Mammary epithelial cell (primary cell): ENCODE measurements at regions of chr1 and their contacts with region 1.

Region 1: GRCh38 chr1:209435654-209436566 is 147.6 kb upstream of the CAMK1G start:
- DNase-seq: peak; percentile 80
- H3K4me3 ChIP-seq: no peak overlapping the region
- H3K27ac ChIP-seq: peak overlapping the region; percentile 99
- H3K4me1 ChIP-seq: peaks cover 51% of the 10 kb centered on the region
- H3K27me3 ChIP-seq: no peaks in the 10 kb centered on the region
- CTCF ChIP-seq: peak; percentile 92 to 97

Region 2: DNA sequence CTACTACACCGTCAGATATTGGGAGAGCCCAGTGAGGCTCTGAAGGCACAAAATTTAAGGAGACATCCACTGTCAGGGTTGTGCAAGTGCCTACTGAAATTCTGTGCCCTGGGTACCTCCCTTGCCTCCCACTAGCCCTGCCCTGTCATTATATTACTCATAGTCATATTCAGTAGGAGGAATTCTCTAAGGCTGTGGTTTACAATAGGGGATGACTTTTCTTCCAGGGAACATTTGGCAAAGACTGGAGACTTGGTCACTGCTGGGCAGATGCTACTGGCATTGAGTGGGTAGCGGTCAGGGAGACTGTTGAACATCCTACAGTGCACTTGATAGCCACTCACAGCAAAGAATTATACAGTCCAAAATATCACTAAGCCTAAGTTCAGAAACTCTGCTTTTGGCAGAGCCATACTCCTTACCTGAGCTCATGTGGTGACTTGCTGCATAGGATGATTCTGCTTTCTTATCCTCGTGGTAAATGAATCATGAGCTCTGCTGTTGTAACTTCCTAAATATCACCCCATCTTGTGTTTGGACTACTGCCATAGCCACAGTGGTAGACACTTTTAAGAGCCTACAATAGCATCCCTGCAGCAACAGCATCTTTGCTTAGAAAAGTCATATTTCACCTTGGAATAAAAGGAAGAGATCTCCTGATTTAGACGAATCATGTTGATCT is 628.3 kb before region 1 on chr1:
- CTCF ChIA-PET with region 1: no interaction called
- dilution Hi-C with region 1: no loop called
- in situ Hi-C with region 1: no loop called
- intact Hi-C with region 1: loop called (anchors 5 kb)
- DNase-seq: peak; percentile 96
- H3K4me3 ChIP-seq: no peak overlapping the region
- H3K27ac ChIP-seq: peak overlapping the region; percentile 94
- H3K4me1 ChIP-seq: peaks cover 38% of the 10 kb centered on the region
- H3K27me3 ChIP-seq: no peaks in the 10 kb centered on the region
- CTCF ChIP-seq: no peak

Region 3: GRCh38 chr1:209248649-209249279 is 187.1 kb before region 1 on chr1:
- CTCF ChIA-PET with region 1: interaction called, 4 read pairs
- dilution Hi-C with region 1: no loop called
- in situ Hi-C with region 1: loop called (anchors 5 kb)
- intact Hi-C with region 1: loop called (anchors 1 kb)
- DNase-seq: peak; percentile 56
- H3K4me3 ChIP-seq: no peak overlapping the region
- H3K27ac ChIP-seq: no peak overlapping the region
- H3K4me1 ChIP-seq: peaks cover 13% of the 10 kb centered on the region
- H3K27me3 ChIP-seq: no peaks in the 10 kb centered on the region
- CTCF ChIP-seq: peak; percentile 92 to 95

Region 4: DNA sequence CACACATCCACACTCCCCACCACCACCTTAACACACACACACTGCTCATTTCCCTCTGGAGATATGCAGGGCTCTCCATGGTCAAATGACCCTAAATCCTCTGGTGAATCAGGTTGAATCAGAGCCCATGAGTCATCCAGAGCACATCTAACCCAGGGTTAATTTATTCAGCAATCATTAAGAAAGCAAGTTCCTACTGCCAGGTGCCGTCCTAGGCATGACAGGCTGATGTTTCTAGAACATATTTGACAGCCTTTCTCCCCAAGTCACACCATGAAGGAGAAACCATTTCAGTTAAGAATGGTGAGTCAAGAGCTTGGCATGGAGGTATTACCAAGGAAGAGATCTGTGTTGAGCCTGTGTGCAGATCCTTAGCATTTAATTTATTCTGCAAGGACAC is 46.7 kb before region 1 on chr1:
- CTCF ChIA-PET with region 1: interaction called, 6 read pairs
- dilution Hi-C with region 1: no loop called
- in situ Hi-C with region 1: loop called in 1 of 2 experiments (anchors 5 kb)
- intact Hi-C with region 1: loop called (anchors 1 kb)
- DNase-seq: peak; percentile 98
- H3K4me3 ChIP-seq: no peak overlapping the region
- H3K27ac ChIP-seq: peak overlapping the region; percentile 98
- H3K4me1 ChIP-seq: peaks cover 64% of the 10 kb centered on the region
- H3K27me3 ChIP-seq: no peaks in the 10 kb centered on the region
- CTCF ChIP-seq: no peak

Region 5: GRCh38 chr1:209417761-209418160 is 18.1 kb before region 1 on chr1:
- CTCF ChIA-PET with region 1: no interaction called
- dilution Hi-C with region 1: no loop called
- in situ Hi-C with region 1: no loop called
- intact Hi-C with region 1: no loop called
- DNase-seq: peak; percentile 76
- H3K4me3 ChIP-seq: no peak overlapping the region
- H3K27ac ChIP-seq: peak overlapping the region; percentile 97
- H3K4me1 ChIP-seq: peaks cover 81% of the 10 kb centered on the region
- H3K27me3 ChIP-seq: no peaks in the 10 kb centered on the region
- CTCF ChIP-seq: no peak

Region 6: DNA sequence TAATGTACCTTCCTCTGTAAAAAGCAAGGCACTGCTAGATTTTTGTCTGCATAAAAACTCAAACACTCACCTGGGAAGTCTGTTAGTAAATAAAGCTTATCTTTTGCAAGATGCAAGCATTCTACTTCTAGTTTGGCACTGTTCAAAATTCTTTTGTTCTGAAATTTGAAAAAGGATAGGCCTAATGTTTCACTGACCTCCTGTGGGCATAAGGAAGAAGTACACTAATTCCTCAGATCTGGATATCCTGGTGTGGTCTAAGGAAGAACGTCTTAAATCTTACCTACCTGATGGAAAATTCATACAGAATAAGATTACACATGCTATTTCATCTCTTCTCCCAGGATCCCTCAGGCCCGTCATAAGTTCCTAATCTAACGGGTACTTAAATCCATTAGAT is 54.1 kb after region 1 on chr1:
- CTCF ChIA-PET with region 1: interaction called, 5 read pairs
- dilution Hi-C with region 1: no loop called
- in situ Hi-C with region 1: loop called in 1 of 2 experiments (anchors 10 kb)
- intact Hi-C with region 1: loop called (anchors 1 kb)
- DNase-seq: peak; percentile 26
- H3K4me3 ChIP-seq: no peak overlapping the region
- H3K27ac ChIP-seq: no peak overlapping the region
- H3K4me1 ChIP-seq: peaks cover 26% of the 10 kb centered on the region
- H3K27me3 ChIP-seq: no peaks in the 10 kb centered on the region
- CTCF ChIP-seq: peak; percentile 74 to 77